ENCODE measurements at regions of chr13 and their contacts with region 1.

Region 1: DNA sequence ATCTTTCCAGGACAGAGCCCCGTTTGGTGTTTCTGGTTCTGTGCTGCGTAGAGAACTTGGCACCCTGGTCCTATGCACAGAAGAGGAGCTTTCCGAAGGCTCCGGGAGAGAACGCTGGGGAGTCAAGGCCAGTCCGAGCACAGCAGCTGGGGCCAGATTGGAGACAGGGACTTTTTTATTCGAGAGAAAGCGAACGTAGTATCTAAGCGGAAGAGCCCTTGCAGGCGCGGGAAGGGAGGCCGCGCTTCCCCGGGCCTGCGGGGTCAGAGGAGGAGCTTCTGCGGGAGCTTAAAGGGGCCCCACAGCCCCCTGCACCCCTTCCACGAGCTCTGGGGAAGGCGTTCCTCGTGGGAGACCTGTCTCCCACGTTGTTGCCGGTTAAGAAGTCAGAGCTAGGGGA is 48.6 kb upstream of the ARHGEF7 start:
- DNase-seq: no peak
- H3K4me3 ChIP-seq: no peak overlapping the region
- H3K27ac ChIP-seq: no peak overlapping the region
- H3K4me1 ChIP-seq: peaks cover 7% of the 10 kb centered on the region
- H3K27me3 ChIP-seq: peaks cover 13 to 23% of the 10 kb centered on the region in 2 experiments
- CTCF ChIP-seq: no peak
- POLR2A ChIP-seq: no peak

Region 2: DNA sequence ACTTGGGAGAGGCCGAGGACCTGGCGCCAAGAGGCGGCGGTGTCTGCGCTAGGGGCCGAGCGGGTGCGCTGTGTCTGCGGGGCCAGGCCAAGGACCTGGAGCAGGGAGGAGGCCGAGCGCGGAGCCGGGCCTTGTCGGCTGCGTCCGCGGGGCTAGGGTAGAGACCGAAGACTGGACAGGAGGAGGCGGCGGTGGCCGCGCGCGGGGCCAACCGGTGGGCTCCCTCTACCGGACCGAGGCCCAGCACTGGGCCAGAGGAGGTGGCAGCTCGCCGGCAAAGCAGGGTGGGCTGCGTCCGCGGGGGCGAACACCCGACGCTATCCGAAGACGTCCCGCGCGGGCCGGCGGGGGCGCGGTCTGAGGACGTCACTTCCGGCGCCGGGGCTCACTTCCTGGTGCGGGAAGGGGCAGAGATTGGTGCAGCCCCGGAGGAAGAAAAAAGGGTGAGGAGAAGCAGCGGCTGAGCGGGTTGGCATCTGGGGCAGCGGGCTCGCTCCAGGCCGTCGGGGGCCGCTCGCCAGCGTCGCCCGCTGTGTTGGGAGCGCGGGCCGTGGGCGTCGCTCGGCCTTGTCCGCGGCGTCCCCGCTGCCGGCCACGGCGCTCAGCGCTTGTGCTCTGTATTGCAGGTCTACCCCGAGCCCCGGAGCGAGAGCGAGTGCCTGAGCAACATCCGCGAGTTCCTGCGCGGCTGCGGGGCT is 86.9 kb after region 1 on chr13:
- CTCF ChIA-PET with region 1: interaction called, 10 read pairs
- POLR2A ChIA-PET with region 1: no interaction called
- dilution Hi-C with region 1: no loop called
- intact Hi-C with region 1: loop called (anchors 1 kb)
- DNase-seq: peak; percentile 96
- H3K4me3 ChIP-seq: peak overlapping the region; percentile 80 to 97 (median 90)
- H3K27ac ChIP-seq: peak overlapping the region; percentile 71
- H3K4me1 ChIP-seq: peaks cover 15% of the 10 kb centered on the region
- H3K27me3 ChIP-seq: peaks cover 6 to 17% of the 10 kb centered on the region in 2 experiments
- CTCF ChIP-seq: peak; percentile 21 to 31
- POLR2A ChIP-seq: peak; percentile 52

Region 3: DNA sequence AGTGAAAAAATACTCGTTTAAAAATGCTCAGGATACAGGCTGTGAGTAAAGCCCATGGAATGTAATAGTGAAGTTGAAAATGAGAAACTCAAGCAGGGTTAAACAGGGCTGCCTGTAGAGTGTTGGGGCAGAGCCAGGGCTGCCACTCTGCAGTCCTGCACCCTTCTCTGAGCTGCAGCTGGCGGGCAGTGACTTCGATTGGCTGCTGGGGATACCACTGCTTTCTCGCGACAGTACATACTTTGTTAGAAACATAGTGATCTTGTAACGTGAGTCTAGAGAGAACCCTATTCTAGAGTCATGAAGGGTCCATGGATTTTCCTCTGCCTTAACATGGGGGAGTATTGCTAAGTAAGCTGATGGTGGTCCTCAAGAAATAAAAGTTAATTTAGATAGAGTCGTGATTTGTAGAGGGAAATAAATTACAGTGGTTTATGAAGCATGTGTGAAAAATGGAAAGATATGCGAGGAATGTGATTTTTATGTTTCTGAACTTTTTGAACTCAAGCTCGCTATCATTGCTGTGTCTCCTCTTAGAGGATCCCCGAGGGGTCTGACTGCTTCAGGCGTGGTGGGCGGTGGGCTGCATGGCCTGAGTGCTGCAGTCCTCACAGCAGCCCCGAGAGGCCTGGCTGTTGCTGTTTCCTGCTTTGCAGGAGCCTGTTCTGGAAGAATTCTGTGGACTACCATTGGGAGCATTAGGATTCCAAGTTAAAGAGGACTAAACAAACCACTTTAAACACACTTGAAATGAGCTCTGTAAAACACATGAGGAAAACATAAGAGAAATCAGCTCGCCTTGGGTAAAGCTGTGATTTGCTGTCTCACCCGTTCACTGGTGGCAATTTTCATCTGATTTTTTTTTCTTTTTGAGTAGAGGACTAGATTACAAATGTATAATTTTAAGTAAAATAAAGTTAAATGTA is 144.3 kb after region 1 on chr13:
- CTCF ChIA-PET with region 1: interaction called, 43 read pairs
- POLR2A ChIA-PET with region 1: no interaction called
- dilution Hi-C with region 1: no loop called
- intact Hi-C with region 1: no loop called
- DNase-seq: peak; percentile 75
- H3K4me3 ChIP-seq: no peak overlapping the region
- H3K27ac ChIP-seq: peak overlapping the region; percentile 43
- H3K4me1 ChIP-seq: peaks cover 38% of the 10 kb centered on the region
- H3K27me3 ChIP-seq: no peaks in the 10 kb centered on the region
- CTCF ChIP-seq: no peak
- POLR2A ChIP-seq: no peak

Region 4: GRCh38 chr13:111228262-111229144 is 162.0 kb after region 1 on chr13:
- CTCF ChIA-PET with region 1: interaction called, 46 read pairs
- POLR2A ChIA-PET with region 1: no interaction called
- dilution Hi-C with region 1: no loop called
- intact Hi-C with region 1: loop called (anchors 1 kb)
- DNase-seq: no peak
- H3K4me3 ChIP-seq: no peak overlapping the region
- H3K27ac ChIP-seq: no peak overlapping the region
- H3K4me1 ChIP-seq: no peaks in the 10 kb centered on the region
- H3K27me3 ChIP-seq: no peaks in the 10 kb centered on the region
- CTCF ChIP-seq: no peak
- POLR2A ChIP-seq: no peak

Measured in endothelial cell of umbilical vein (primary cell).